Activated T-helper 1 cell treated with anti-CD3 and anti-CD28 coated beads, Interleukin-12 subunit alpha, Interleukin-12 subunit beta, Interleukin-2, Interleukin-4 antibody, amounts not matched to agents 30 ng/mL and 10 ng/mL and 1 ng/mL, durations not matched to agents 14 hours and 24 hours and 36 hours (primary cell): ENCODE measurements at regions of chr1 and their contacts with region 1.

Region 1: DNA sequence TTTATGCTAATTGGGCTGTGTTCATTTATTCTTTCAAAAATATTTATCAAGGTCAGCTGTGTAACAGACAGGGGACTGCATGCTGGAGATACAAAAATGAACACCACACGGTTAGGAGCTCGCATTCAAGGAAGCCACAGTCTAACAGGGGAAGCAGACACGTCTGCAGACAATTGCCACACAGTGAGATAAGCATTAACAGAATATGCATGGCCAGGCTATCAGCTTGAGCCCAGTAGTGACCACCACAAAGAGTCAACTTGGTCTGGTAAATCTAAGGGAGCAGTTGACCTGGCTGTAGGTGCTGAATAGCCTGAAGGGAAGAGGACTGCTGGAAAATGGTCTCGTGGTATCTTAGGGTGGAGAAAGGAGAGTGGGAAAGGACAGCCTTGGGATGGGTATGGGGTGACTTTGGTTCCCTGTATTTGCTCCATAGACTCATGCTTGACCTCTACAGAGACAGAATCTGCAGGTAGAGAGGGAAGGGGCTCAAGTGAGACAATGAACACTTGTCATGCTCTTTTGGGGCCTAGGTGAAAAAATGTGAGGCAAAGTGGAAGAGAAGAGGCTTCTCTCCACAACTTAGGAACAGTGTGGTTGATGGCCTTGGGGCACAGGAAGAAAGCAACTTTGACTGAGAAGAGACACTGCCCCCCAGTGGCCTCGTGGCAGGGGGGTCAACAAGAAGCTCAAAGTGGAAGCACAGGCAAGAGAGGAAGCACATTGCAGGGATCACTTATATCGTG is 7.6 kb upstream of the NPL start:
- DNase-seq: peak; percentile 52
- H3K4me3 Mint-ChIP-seq: no peak overlapping the region
- H3K27ac Mint-ChIP-seq: no peak overlapping the region
- H3K4me1 Mint-ChIP-seq: peaks cover 30% of the 10 kb centered on the region
- H3K27me3 Mint-ChIP-seq: peaks cover 4% of the 10 kb centered on the region

Region 2: GRCh38 chr1:182595641-182596240 is 186.3 kb before region 1 on chr1:
- intact Hi-C with region 1: loop called (anchors 1 kb)
- DNase-seq: peak; percentile 34
- H3K4me3 Mint-ChIP-seq: no peak overlapping the region
- H3K27ac Mint-ChIP-seq: no peak overlapping the region
- H3K4me1 Mint-ChIP-seq: peaks cover 16% of the 10 kb centered on the region
- H3K27me3 Mint-ChIP-seq: peaks cover 2% of the 10 kb centered on the region

Region 3: GRCh38 chr1:182716740-182717720 is 65.0 kb before region 1 on chr1:
- intact Hi-C with region 1: loop called (anchors 2 kb)
- DNase-seq: no peak
- H3K4me3 Mint-ChIP-seq: no peak overlapping the region
- H3K27ac Mint-ChIP-seq: peak overlapping the region; percentile 3
- H3K4me1 Mint-ChIP-seq: peaks cover 63% of the 10 kb centered on the region
- H3K27me3 Mint-ChIP-seq: no peaks in the 10 kb centered on the region

Region 4: GRCh38 chr1:182795563-182796228 is 13.7 kb after region 1 on chr1:
- intact Hi-C with region 1: no loop called
- DNase-seq: no peak
- H3K4me3 Mint-ChIP-seq: no peak overlapping the region
- H3K27ac Mint-ChIP-seq: no peak overlapping the region
- H3K4me1 Mint-ChIP-seq: peaks cover 11% of the 10 kb centered on the region
- H3K27me3 Mint-ChIP-seq: peaks cover 3% of the 10 kb centered on the region

Region 5: DNA sequence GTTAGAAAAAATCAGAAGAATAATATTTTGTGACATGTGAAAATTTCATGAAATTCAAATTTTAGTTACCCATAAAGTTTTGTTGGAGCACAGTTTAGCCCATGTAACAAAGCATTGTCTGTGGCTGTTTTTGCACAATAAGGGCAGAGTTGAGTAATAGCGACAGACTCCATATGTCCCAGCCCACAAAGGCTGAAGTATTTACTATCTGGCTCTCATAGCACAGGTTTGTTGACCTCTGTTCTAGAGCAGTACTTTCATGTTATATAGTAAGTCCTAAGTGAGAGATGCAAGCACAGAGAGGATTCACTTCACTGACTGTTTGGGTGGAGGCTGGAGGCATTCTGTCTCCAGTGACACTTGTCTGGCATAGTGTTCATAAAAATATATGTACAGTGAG is 248.0 kb after region 1 on chr1:
- intact Hi-C with region 1: no loop called
- DNase-seq: no peak
- H3K4me3 Mint-ChIP-seq: no peak overlapping the region
- H3K27ac Mint-ChIP-seq: no peak overlapping the region
- H3K4me1 Mint-ChIP-seq: peaks cover 7% of the 10 kb centered on the region
- H3K27me3 Mint-ChIP-seq: peaks cover 63% of the 10 kb centered on the region